ENCODE measurements at regions of chr15 and their contacts with region 1.

Region 1: GRCh38 chr15:38683382-38684242 is 119.0 kb upstream of the RASGRP1 start:
- DNase-seq: no peak
- H3K4me3 ChIP-seq: no peak overlapping the region
- H3K27ac ChIP-seq: no peak overlapping the region
- H3K4me1 ChIP-seq: no peaks in the 10 kb centered on the region
- H3K27me3 ChIP-seq: peaks cover 11% of the 10 kb centered on the region
- CTCF ChIP-seq: peak; percentile 84

Region 2: GRCh38 chr15:38424101-38424552 is 259.5 kb before region 1 on chr15:
- intact Hi-C with region 1: no loop called
- DNase-seq: no peak
- H3K4me3 ChIP-seq: no peak overlapping the region
- H3K27ac ChIP-seq: no peak overlapping the region
- H3K4me1 ChIP-seq: no peaks in the 10 kb centered on the region
- H3K27me3 ChIP-seq: peaks cover 30% of the 10 kb centered on the region
- CTCF ChIP-seq: no peak

Region 3: DNA sequence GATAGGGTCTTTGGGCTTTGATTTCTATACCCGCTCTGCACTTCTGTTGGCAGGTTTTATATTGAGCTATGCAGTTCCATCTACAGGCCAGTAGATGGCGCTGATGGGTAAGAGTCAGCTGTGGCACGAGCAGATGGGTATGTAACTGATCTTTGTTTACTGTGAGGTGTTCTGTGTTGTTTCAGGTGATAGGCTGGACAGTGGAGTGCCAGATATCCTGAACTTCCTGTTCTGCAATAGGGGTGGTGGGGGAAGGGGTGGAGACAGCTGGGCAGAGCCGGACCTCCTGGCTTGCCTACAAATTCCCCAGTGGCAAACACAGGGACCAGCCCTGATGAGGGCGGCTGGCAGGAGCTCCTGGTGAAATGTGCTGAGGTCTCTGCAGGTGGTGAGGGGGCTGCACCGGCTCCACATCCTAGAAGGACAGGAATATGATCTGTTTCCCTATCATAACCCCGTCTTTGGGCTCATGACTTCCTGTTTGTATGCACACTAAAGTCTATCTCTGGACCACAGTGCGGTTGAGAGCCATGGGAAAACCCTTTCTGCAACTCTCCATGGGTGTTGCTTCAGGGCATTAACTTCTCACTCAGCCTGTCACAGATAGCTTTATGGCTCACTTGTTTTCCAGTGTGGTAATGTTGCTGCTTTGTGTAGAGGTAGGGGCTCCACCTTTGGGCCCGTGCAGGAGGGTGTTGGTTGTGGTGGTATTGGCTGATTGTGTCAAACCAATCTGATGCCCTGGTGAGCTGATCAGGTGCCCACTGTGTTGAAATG is 243.1 kb before region 1 on chr15:
- intact Hi-C with region 1: loop called (anchors 10 kb)
- DNase-seq: no peak
- H3K4me3 ChIP-seq: no peak overlapping the region
- H3K27ac ChIP-seq: no peak overlapping the region
- H3K4me1 ChIP-seq: peaks cover 8% of the 10 kb centered on the region
- H3K27me3 ChIP-seq: peaks cover 11% of the 10 kb centered on the region
- CTCF ChIP-seq: peak; percentile 96

Region 4: GRCh38 chr15:38563723-38564519 is 119.7 kb before region 1 on chr15:
- intact Hi-C with region 1: loop called (anchors 10 kb)
- DNase-seq: peak; percentile 64
- H3K4me3 ChIP-seq: peak overlapping the region; percentile 72
- H3K27ac ChIP-seq: no peak overlapping the region
- H3K4me1 ChIP-seq: peaks cover 14% of the 10 kb centered on the region
- H3K27me3 ChIP-seq: peaks cover 81% of the 10 kb centered on the region
- CTCF ChIP-seq: peak; percentile 92